ENCODE measurements at regions of chr16 and their contacts with region 1.

Region 1: DNA sequence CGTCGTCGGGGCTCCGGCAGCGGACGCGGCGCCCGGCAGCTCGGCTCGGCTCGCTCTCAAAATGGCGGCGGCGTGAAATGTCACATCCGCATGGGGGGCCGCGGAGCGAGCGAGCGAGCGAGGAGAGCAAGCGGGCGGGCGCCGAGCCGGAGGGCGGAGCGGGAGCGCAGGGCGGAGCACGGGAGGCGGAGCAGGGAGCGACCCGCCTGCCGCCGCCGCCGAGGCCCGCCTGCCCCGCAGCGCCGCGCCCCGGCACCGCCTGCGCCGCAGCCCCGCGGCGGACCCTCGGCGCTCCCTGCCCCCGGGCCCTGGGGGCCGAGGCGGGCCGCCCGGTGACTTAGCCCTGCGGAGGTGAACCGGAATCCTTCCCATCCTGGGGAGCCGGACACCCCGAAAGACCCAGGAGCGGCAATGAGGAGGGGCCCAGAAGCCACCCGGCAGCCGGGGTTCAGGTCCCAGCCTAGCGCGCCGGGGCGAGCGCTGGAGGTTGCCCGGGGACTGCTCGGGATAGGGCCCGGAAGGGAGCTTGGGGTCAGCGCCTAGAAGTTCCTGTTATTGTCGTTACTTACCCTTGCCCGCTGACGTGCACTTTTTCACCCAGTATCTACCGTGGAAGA is at the start of gene USP7:
- DNase-seq: peak; percentile 84 to 95 (median 92)
- ATAC-seq: peak; percentile 92
- H3K4me3 ChIP-seq: peak within 1 kb of the TSS; percentile 67 to 73
- H3K4me3 Mint-ChIP-seq: peak within 1 kb of the TSS; percentile 96
- H3K27ac ChIP-seq: peak within 1 kb of the TSS; percentile 72 to 76
- H3K27ac Mint-ChIP-seq: peak within 1 kb of the TSS; percentile 95
- H3K4me1 ChIP-seq: peaks cover 31% of the 10 kb centered on the region
- H3K4me1 Mint-ChIP-seq: peaks cover 38% of the 10 kb centered on the region
- H3K27me3 ChIP-seq: no peaks in the 10 kb centered on the region
- H3K27me3 Mint-ChIP-seq: no peaks in the 10 kb centered on the region
- CTCF ChIP-seq: no peak
- total RNA-seq, gene USP7: 301 to 317 TPM

Region 2: DNA sequence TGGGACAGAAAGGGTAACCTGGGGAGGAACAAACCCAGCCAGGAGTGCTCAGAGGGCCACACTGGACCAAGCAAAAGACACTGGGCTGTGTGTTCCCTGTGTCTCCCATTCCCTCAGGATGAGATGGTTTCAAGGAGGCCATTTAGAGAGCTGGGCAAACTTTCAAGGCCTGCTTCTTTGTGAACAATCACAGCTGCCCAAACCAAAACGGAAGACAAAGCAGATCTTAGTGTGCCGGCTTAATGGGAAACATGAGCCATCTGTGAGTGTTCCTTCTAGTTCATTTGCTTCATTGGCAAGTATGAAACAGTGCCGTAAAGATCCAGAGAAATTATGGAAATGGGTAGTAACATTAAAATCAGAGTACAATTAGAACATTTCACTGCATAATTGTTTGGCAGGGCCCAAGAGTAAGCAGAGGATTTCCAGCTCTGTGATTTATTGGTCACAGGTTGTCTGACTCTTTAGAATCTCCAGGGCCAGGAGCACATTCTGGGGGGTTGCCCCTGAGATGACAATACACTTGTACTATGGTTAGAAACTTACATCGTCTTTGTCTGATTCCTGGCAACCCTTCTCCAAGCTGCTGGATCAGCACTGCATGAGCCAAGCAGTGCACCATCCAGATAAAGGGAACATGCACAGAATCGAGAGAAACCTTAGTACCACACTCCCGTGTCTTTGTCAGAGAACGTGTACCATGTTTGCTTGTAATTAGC is 1219.2 kb before region 1 on chr16:
- CTCF ChIA-PET with region 1: no interaction called
- POLR2A ChIA-PET with region 1: no interaction called
- intact Hi-C with region 1: no loop called
- DNase-seq: no peak
- ATAC-seq: no peak
- H3K4me3 ChIP-seq: no peak overlapping the region
- H3K4me3 Mint-ChIP-seq: no peak overlapping the region
- H3K27ac ChIP-seq: no peak overlapping the region
- H3K27ac Mint-ChIP-seq: no peak overlapping the region
- H3K4me1 ChIP-seq: no peaks in the 10 kb centered on the region
- H3K4me1 Mint-ChIP-seq: no peaks in the 10 kb centered on the region
- H3K27me3 ChIP-seq: no peaks in the 10 kb centered on the region
- H3K27me3 Mint-ChIP-seq: no peaks in the 10 kb centered on the region
- CTCF ChIP-seq: no peak

Region 3: GRCh38 chr16:8621572-8622314 is 342.2 kb before region 1 on chr16 and contains the start of gene METTL22:
- CTCF ChIA-PET with region 1: no interaction called
- POLR2A ChIA-PET with region 1: no interaction called
- intact Hi-C with region 1: loop called (anchors 5 kb)
- DNase-seq: peak; percentile 83 to 96 (median 91)
- ATAC-seq: peak; percentile 98
- H3K4me3 ChIP-seq: peak within 1 kb of the TSS; percentile 90 to 100
- H3K4me3 Mint-ChIP-seq: peak within 1 kb of the TSS; percentile 94
- H3K27ac ChIP-seq: peak within 1 kb of the TSS; percentile 83 to 84
- H3K27ac Mint-ChIP-seq: peak within 1 kb of the TSS; percentile 92
- H3K4me1 ChIP-seq: peaks cover 11% of the 10 kb centered on the region
- H3K4me1 Mint-ChIP-seq: peaks cover 20% of the 10 kb centered on the region
- H3K27me3 ChIP-seq: no peaks in the 10 kb centered on the region
- H3K27me3 Mint-ChIP-seq: no peaks in the 10 kb centered on the region
- CTCF ChIP-seq: no peak
- total RNA-seq, gene METTL22: 30.0 to 30.8 TPM

Region 4: GRCh38 chr16:8674413-8675022 is 289.4 kb before region 1 on chr16 and contains the start of gene ABAT:
- CTCF ChIA-PET with region 1: no interaction called
- POLR2A ChIA-PET with region 1: no interaction called
- intact Hi-C with region 1: loop called in 1 of 2 experiments (anchors 5 kb)
- DNase-seq: peak; percentile 74 to 93 (median 88)
- ATAC-seq: peak; percentile 96
- H3K4me3 ChIP-seq: peak within 1 kb of the TSS; percentile 58 to 75
- H3K4me3 Mint-ChIP-seq: peak within 1 kb of the TSS; percentile 89
- H3K27ac ChIP-seq: peak within 1 kb of the TSS in 1 of 2 experiments; percentile 37
- H3K27ac Mint-ChIP-seq: peak within 1 kb of the TSS; percentile 90
- H3K4me1 ChIP-seq: peaks cover 16% of the 10 kb centered on the region
- H3K4me1 Mint-ChIP-seq: peaks cover 19% of the 10 kb centered on the region
- H3K27me3 ChIP-seq: no peaks in the 10 kb centered on the region
- H3K27me3 Mint-ChIP-seq: no peaks in the 10 kb centered on the region
- CTCF ChIP-seq: no peak
- total RNA-seq, gene ABAT: 4.1 to 4.2 TPM

Region 5: GRCh38 chr16:8797364-8798173 is 166.4 kb before region 1 on chr16 and contains the starts of genes PMM2 and TMEM186:
- CTCF ChIA-PET with region 1: no interaction called
- POLR2A ChIA-PET with region 1: no interaction called
- intact Hi-C with region 1: loop called (anchors 2 to 5 kb)
- DNase-seq: peak; percentile 87 to 98 (median 95)
- ATAC-seq: peak; percentile 95
- H3K4me3 ChIP-seq: peak within 1 kb of the TSS; percentile 77 to 97
- H3K4me3 Mint-ChIP-seq: peak within 1 kb of the TSS; percentile 95
- H3K27ac ChIP-seq: peak within 1 kb of the TSS; percentile 78 to 81
- H3K27ac Mint-ChIP-seq: peak within 1 kb of the TSS; percentile 93
- H3K4me1 ChIP-seq: peaks cover 34% of the 10 kb centered on the region
- H3K4me1 Mint-ChIP-seq: peaks cover 46% of the 10 kb centered on the region
- H3K27me3 ChIP-seq: no peaks in the 10 kb centered on the region
- H3K27me3 Mint-ChIP-seq: no peaks in the 10 kb centered on the region
- CTCF ChIP-seq: no peak
- total RNA-seq, gene PMM2: 29.6 to 32.7 TPM
- total RNA-seq, gene TMEM186: 2.4 to 2.9 TPM

Region 6: DNA sequence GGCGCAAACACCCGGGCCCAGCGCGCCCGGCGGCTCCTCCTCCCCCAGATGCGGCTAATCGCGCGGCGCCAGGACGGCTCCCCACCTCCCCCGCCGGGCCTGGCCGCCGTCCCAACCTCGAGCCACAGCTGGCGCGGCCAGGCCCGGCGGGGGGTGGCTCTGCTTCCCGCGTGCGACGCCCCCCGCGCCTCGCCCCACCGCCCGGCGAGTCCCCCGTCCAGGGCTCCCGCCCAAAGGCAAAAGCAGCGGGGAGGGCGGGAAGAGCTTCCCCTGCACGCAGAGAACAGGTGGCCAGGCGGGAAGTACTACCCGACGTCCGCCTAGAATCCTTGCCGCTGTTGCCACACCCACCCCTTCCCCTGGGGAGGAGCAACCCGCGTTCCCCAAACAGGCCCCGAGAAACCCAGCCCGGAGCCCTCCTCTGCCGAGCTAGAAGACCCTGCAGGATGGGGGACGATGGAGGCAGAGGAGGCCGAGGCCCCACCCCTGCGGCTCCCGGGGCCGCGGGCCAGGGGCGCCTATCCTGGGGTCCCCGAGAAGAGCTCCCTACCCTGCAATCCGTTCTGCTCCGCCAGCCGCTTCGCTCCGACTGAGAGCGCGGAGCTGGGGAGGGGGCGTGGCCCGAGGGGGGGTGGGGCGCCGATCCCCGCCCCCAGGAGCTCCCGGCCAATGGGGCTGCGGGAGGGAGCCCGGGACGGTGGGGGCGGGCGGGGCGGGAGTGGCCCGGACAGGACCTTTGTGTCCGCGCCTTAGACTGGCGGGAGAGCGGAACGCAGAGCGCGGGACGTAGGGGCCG is 95.3 kb before region 1 on chr16 and contains the start of gene CARHSP1:
- CTCF ChIA-PET with region 1: no interaction called
- POLR2A ChIA-PET with region 1: interaction called, 5 read pairs
- intact Hi-C with region 1: loop called (anchors 1 to 2 kb)
- DNase-seq: peak; percentile 55 to 90 (median 75)
- ATAC-seq: peak; percentile 76
- H3K4me3 ChIP-seq: peak within 1 kb of the TSS; percentile 68 to 72
- H3K4me3 Mint-ChIP-seq: peak within 1 kb of the TSS; percentile 97
- H3K27ac ChIP-seq: peak within 1 kb of the TSS; percentile 41 to 52
- H3K27ac Mint-ChIP-seq: peak within 1 kb of the TSS; percentile 93
- H3K4me1 ChIP-seq: peaks cover 53% of the 10 kb centered on the region
- H3K4me1 Mint-ChIP-seq: peaks cover 57% of the 10 kb centered on the region
- H3K27me3 ChIP-seq: no peaks in the 10 kb centered on the region
- H3K27me3 Mint-ChIP-seq: no peaks in the 10 kb centered on the region
- CTCF ChIP-seq: no peak
- total RNA-seq, gene CARHSP1: 28.0 to 33.3 TPM

Region 7: DNA sequence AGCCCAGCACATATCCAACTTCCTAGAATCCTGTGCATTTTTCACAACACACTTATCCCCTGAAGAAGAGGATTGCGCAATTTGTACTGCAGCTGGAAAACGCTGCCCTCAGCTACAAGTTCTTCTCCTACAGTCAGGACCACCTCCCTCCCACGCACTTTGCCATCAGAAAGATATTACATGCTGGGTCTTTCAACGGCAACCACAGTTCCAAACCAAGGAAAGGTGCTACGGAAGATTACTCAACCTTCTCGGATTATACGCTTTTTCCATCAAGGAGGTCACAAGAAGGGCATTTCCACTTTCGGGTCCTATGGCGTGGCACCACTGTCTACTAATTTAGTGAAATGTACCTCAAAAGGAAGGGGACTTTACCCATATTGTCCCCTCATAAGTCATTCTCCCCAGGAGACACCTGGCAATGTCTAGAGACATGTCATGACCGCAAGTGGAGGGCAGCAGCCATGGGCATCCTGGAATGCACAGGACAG is 35.4 kb before region 1 on chr16:
- CTCF ChIA-PET with region 1: no interaction called
- POLR2A ChIA-PET with region 1: no interaction called
- intact Hi-C with region 1: loop called (anchors 5 kb)
- DNase-seq: no peak
- ATAC-seq: no peak
- H3K4me3 ChIP-seq: no peak overlapping the region
- H3K4me3 Mint-ChIP-seq: no peak overlapping the region
- H3K27ac ChIP-seq: no peak overlapping the region
- H3K27ac Mint-ChIP-seq: no peak overlapping the region
- H3K4me1 ChIP-seq: no peaks in the 10 kb centered on the region
- H3K4me1 Mint-ChIP-seq: peaks cover 53% of the 10 kb centered on the region
- H3K27me3 ChIP-seq: no peaks in the 10 kb centered on the region
- H3K27me3 Mint-ChIP-seq: no peaks in the 10 kb centered on the region
- CTCF ChIP-seq: no peak

Region 8: DNA sequence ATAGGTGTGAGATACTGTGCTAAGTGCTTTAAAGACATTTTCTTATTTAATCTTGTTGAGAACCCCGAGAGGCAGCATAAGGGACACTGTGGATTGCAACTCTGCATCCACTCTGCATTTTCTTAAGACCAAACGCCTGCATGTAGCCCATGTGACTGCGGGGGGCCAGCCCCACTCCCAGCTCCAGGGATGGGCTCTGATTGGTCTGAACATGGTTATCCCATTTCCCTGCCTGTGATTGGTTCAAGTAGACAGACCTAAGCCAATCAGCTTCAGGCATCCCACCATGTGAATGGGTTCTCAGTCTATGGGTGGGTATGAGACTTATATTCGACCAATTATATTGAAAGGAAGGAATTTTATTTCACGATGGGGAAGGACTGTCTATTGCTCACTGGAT is 33.0 kb after region 1 on chr16:
- CTCF ChIA-PET with region 1: no interaction called
- POLR2A ChIA-PET with region 1: no interaction called
- intact Hi-C with region 1: no loop called
- DNase-seq: no peak
- ATAC-seq: no peak
- H3K4me3 ChIP-seq: no peak overlapping the region
- H3K4me3 Mint-ChIP-seq: no peak overlapping the region
- H3K27ac ChIP-seq: no peak overlapping the region
- H3K27ac Mint-ChIP-seq: no peak overlapping the region
- H3K4me1 ChIP-seq: no peaks in the 10 kb centered on the region
- H3K4me1 Mint-ChIP-seq: no peaks in the 10 kb centered on the region
- H3K27me3 ChIP-seq: no peaks in the 10 kb centered on the region
- H3K27me3 Mint-ChIP-seq: no peaks in the 10 kb centered on the region
- CTCF ChIP-seq: no peak

Region 9: DNA sequence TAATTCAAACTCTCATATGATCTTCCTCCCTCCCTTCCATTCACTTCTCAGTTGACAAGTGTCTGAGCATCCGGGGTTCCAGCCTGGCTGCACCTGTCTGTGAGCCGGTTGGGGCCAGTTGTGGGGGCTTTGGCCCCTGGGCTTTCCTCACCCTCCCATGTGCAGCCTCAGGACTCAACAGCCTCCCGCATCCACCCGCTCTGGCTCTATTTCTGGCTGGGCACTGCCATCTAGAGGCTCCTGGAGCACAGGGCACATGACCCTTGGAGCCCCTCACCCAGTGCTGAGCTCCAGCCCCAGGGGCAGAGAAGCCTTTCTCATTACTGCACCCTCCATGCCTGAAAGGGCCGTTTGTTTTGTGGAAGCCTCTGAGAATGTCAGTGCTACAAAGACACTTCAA is 170.8 kb after region 1 on chr16:
- CTCF ChIA-PET with region 1: interaction called, 3 read pairs
- POLR2A ChIA-PET with region 1: no interaction called
- intact Hi-C with region 1: loop called in 1 of 2 experiments (anchors 5 kb)
- DNase-seq: peak; percentile 32 to 76 (median 64)
- ATAC-seq: peak; percentile 80
- H3K4me3 ChIP-seq: no peak overlapping the region
- H3K4me3 Mint-ChIP-seq: no peak overlapping the region
- H3K27ac ChIP-seq: no peak overlapping the region
- H3K27ac Mint-ChIP-seq: peak overlapping the region; percentile 55
- H3K4me1 ChIP-seq: peaks cover 13% of the 10 kb centered on the region
- H3K4me1 Mint-ChIP-seq: peaks cover 20% of the 10 kb centered on the region
- H3K27me3 ChIP-seq: no peaks in the 10 kb centered on the region
- H3K27me3 Mint-ChIP-seq: no peaks in the 10 kb centered on the region
- CTCF ChIP-seq: peak; percentile 68